ENCODE measurements at regions of chr4 and their contacts with region 1.

Region 1: GRCh38 chr4:10582059-10582686 is 102.4 kb downstream of the CLNK start:
- DNase-seq: peak in 2 of 9 donors; percentile 8 to 42
- ATAC-seq: no peak
- H3K4me3 ChIP-seq: no peak overlapping the region
- H3K4me3 Mint-ChIP-seq: no peak overlapping the region
- H3K27ac ChIP-seq: no peak overlapping the region
- H3K27ac Mint-ChIP-seq: no peak overlapping the region
- H3K4me1 ChIP-seq: no peaks in the 10 kb centered on the region
- H3K4me1 Mint-ChIP-seq: peaks cover 5 to 15% (median 10%) of the 10 kb centered on the region in 7 donors
- H3K27me3 ChIP-seq: no peaks in the 10 kb centered on the region
- H3K27me3 Mint-ChIP-seq: no peaks in the 10 kb centered on the region

Region 2: DNA sequence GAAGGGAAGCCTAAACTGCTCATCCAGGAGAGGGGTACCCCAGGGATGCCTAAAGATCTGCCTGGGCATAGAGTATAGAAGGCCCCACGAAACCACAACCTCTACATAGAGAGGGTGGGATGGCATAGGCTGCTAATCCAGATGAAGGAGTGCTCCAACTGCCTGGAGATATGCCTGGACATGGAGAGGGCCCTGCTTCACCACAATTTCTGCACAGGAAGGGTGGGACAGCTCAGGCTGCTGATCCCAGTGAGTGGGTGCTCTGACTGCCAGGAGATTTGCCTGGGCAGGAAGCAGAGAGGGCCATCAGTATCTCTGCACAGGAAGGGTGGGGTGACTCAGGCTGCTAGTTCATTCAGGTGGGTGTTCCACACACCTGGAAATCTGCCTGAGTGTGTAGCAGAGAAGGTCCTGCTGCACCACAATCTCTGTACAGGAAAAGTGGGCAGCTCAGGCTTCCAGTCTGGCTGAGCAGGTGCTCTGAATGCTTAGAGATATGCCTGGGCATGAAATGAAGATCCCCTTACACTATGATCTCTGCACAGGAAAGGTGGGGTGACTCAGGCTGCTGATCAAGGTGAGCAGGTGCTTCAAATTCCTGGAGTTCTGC is 186.1 kb before region 1 on chr4:
- CTCF ChIA-PET with region 1: no interaction called
- POLR2A ChIA-PET with region 1: no interaction called
- intact Hi-C with region 1: no loop called
- DNase-seq: no peak
- ATAC-seq: no peak
- H3K4me3 ChIP-seq: no peak overlapping the region
- H3K4me3 Mint-ChIP-seq: peak overlapping the region in 1 of 10 donors; percentile 3
- H3K27ac ChIP-seq: no peak overlapping the region
- H3K27ac Mint-ChIP-seq: peak overlapping the region in 1 of 9 donors; percentile 59
- H3K4me1 ChIP-seq: no peaks in the 10 kb centered on the region
- H3K4me1 Mint-ChIP-seq: peaks cover 0 to 12% (median 7%) of the 10 kb centered on the region in 7 donors
- H3K27me3 ChIP-seq: no peaks in the 10 kb centered on the region
- H3K27me3 Mint-ChIP-seq: peaks cover 0 to 19% (median 14%) of the 10 kb centered on the region in 5 donors

Region 3: GRCh38 chr4:11098461-11098860 is 516.3 kb after region 1 on chr4:
- CTCF ChIA-PET with region 1: no interaction called
- POLR2A ChIA-PET with region 1: no interaction called
- intact Hi-C with region 1: loop called in 1 of 2 experiments (anchors 10 kb)
- DNase-seq: no peak
- ATAC-seq: no peak
- H3K4me3 ChIP-seq: no peak overlapping the region
- H3K4me3 Mint-ChIP-seq: no peak overlapping the region
- H3K27ac ChIP-seq: no peak overlapping the region
- H3K27ac Mint-ChIP-seq: peak overlapping the region in 3 of 9 donors; percentile 47 to 65 (median 60)
- H3K4me1 ChIP-seq: peaks cover 0 to 3% of the 10 kb centered on the region in 2 donors
- H3K4me1 Mint-ChIP-seq: peaks cover 0 to 42% (median 14%) of the 10 kb centered on the region in 7 donors
- H3K27me3 ChIP-seq: no peaks in the 10 kb centered on the region
- H3K27me3 Mint-ChIP-seq: no peaks in the 10 kb centered on the region

Region 4: DNA sequence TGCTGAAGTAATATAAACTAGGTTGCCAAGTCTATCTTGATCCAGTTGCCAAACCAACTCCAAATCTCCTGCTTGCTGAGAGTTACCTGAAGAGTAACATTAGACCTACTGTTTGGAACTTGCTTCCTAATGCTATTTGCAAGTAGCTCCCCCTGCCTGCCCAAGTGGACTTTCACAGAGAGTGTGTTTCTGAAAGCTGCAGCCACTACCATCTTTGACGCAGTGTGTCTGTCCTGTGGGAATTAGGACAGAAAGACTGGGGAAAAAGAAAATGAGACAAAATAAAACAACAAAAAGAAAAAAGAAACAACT is 1041.5 kb after region 1 on chr4:
- CTCF ChIA-PET with region 1: no interaction called
- POLR2A ChIA-PET with region 1: no interaction called
- intact Hi-C with region 1: loop called in 1 of 2 experiments (anchors 1 kb)
- DNase-seq: peak in 2 of 9 donors; percentile 3 to 7
- ATAC-seq: no peak
- H3K4me3 ChIP-seq: no peak overlapping the region
- H3K4me3 Mint-ChIP-seq: no peak overlapping the region
- H3K27ac ChIP-seq: no peak overlapping the region
- H3K27ac Mint-ChIP-seq: no peak overlapping the region
- H3K4me1 ChIP-seq: no peaks in the 10 kb centered on the region
- H3K4me1 Mint-ChIP-seq: no peaks in the 10 kb centered on the region
- H3K27me3 ChIP-seq: no peaks in the 10 kb centered on the region
- H3K27me3 Mint-ChIP-seq: peaks cover 0 to 5% (median 3%) of the 10 kb centered on the region in 5 donors

Region 5: GRCh38 chr4:11765849-11766453 is 1183.8 kb after region 1 on chr4:
- CTCF ChIA-PET with region 1: no interaction called
- POLR2A ChIA-PET with region 1: no interaction called
- intact Hi-C with region 1: loop called in 1 of 2 experiments (anchors 5 kb)
- DNase-seq: peak in 4 of 9 donors; percentile 1 to 20 (median 8)
- ATAC-seq: no peak
- H3K4me3 ChIP-seq: no peak overlapping the region
- H3K4me3 Mint-ChIP-seq: no peak overlapping the region
- H3K27ac ChIP-seq: no peak overlapping the region
- H3K27ac Mint-ChIP-seq: no peak overlapping the region
- H3K4me1 ChIP-seq: no peaks in the 10 kb centered on the region
- H3K4me1 Mint-ChIP-seq: no peaks in the 10 kb centered on the region
- H3K27me3 ChIP-seq: no peaks in the 10 kb centered on the region
- H3K27me3 Mint-ChIP-seq: peaks cover 0 to 8% (median 5%) of the 10 kb centered on the region in 5 donors

Measured in naive thymus-derived CD4-positive, alpha-beta T cell (primary cell).